BJ (cell line): ENCODE measurements at regions of chr17 and their contacts with region 1.

Region 1: GRCh38 chr17:28842282-28843012 is at the start of gene FAM222B:
- DNase-seq: no peak
- H3K4me3 ChIP-seq: peak within 1 kb of the TSS; percentile 93
- H3K27me3 ChIP-seq: no peaks in the 10 kb centered on the region
- CTCF ChIP-seq: no peak
- polyA plus RNA-seq, gene FAM222B: 4.4 and 5.2 TPM in 2 replicates

Region 2: GRCh38 chr17:28828294-28829040 is 14.0 kb before region 1 on chr17:
- CTCF ChIA-PET with region 1: interaction called, 11 read pairs
- POLR2A ChIA-PET with region 1: interaction called, 5 read pairs
- DNase-seq: peak; percentile 77
- H3K4me3 ChIP-seq: no peak overlapping the region
- H3K27me3 ChIP-seq: no peaks in the 10 kb centered on the region
- CTCF ChIP-seq: no peak